Activated T-helper 2 cell treated with anti-CD3 and anti-CD28 coated beads, Interferon-gamma antibody, Interleukin-2, Interleukin-4, amounts not matched to agents 10 μg/mL and 5 μg/mL and 100 μg/mL, durations not matched to agents 14 hours and 24 hours and 36 hours (primary cell): ENCODE measurements at regions of chr20 and their contacts with region 1.

Region 1: DNA sequence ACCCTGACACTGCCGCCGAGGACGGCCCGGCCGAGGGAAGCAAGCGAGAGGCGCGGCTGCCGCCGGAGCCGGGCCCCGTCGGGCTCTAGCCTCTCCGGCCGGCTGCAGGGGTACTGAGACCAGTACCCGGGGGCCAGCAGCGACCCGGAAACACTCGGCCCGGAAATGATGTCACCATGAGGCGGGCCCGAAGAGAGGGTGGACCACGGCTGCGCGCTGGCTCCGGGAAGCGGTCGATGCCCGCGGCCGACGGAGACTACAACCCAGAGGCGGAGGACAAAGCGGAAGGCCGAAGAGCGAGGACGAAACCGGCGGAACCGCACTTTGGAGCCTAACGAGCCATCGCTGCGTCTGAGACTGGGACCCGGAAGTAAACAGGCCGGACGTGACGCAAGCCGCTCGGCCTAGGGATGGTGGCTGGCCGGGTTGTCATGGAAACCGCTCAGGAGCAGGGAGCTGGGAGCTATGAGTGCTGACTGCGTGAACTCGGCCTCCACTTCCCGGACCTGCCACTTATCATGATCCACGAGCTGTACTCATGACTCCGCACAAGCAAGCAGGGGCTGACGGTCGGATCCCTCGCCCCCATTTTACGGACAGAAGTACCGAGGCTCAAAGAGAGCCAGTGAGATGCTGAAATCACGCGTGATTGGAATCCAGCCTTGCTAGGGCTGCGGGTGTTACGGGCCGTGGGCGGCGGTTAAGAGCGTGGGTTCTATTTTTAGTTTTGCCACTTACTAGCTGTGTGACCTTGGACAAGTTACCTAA is at the start of gene SPATA2:
- DNase-seq: peak; percentile 89
- H3K4me3 Mint-ChIP-seq: peak within 1 kb of the TSS; percentile 96
- H3K27ac Mint-ChIP-seq: peak within 1 kb of the TSS; percentile 100
- H3K4me1 Mint-ChIP-seq: peaks cover 23% of the 10 kb centered on the region
- H3K27me3 Mint-ChIP-seq: no peaks in the 10 kb centered on the region
- total RNA-seq, gene SPATA2: 8.3 and 8.5 TPM in 2 replicates

Region 2: DNA sequence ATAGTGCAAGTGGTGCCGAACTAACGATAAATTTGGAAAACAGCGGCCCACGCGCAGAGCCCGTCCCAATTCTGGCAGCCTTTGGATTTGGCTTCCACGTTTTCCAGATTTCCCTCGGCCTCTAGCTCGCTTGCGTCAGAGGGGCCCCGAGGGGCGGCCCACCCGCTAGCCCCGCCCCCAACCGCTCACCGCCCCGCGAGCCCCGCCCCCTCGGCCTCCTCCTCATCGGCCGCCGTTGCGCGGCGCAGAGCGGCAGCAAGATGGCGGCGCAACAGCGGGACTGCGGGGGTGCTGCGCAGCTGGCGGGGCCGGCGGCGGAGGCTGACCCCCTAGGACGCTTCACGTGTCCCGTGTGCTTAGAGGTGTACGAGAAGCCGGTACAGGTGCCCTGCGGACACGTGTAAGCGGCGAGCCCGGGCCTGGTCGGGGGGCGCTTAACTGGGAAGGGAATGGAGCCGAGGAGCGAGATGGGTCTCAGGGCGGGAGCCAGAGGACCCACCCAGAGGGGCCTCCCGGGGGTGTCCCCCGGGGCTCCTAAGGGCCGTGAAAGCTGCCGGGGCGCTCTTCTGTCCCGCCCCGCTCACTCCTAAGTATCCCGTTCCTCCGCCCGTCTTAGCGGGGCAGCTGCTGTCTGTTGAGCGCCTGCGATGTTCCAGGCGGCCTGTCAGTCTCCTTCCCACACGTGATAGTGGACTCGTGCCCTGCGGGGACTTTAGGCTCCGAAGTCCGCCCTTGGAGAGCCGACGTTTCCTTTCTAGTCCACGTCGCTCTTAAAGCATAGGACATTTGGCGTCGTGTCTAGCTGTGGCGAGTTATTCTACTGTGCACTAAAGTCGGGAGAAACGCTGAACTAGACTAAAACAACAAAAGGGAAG is 20.8 kb after region 1 on chr20 and contains the start of gene RNF114:
- intact Hi-C with region 1: loop called (anchors 2 kb)
- DNase-seq: peak; percentile 78
- H3K4me3 Mint-ChIP-seq: peak within 1 kb of the TSS; percentile 90
- H3K27ac Mint-ChIP-seq: peak within 1 kb of the TSS; percentile 67
- H3K4me1 Mint-ChIP-seq: peaks cover 36% of the 10 kb centered on the region
- H3K27me3 Mint-ChIP-seq: no peaks in the 10 kb centered on the region
- total RNA-seq, gene RNF114: 64.0 and 67.6 TPM in 2 replicates

Region 3: GRCh38 chr20:50095476-50096078 is 180.0 kb after region 1 on chr20:
- intact Hi-C with region 1: no loop called
- DNase-seq: no peak
- H3K4me3 Mint-ChIP-seq: no peak overlapping the region
- H3K27ac Mint-ChIP-seq: no peak overlapping the region
- H3K4me1 Mint-ChIP-seq: peaks cover 10% of the 10 kb centered on the region
- H3K27me3 Mint-ChIP-seq: no peaks in the 10 kb centered on the region